ENCODE measurements at regions of chr3 and their contacts with region 1.

Region 1: DNA sequence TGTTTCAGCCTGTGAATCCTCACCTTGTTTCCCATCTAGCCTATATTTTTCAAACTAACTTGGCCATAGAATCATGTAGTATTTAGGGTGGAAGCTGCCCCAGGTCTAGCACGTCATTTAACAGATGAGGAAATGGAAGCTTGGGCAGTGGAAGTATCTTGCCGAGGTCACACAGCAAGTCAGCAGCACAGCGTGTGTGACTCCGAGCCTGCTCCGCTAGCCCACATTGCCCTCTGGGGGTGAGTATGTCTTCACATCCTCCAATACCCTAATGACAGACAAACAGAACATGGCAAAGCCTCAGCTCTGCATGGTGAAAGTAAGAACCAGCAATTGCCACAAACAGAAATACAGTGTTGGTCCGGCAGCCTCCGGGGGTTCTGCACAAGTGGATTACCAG is 2.2 kb upstream of the CCR5 start:
- DNase-seq: peak; percentile 85
- ATAC-seq: peak; percentile 71
- H3K4me3 Mint-ChIP-seq: peak overlapping the region; percentile 1
- H3K27ac Mint-ChIP-seq: peak overlapping the region; percentile 78
- H3K4me1 Mint-ChIP-seq: peaks cover 70% of the 10 kb centered on the region
- H3K27me3 Mint-ChIP-seq: no peaks in the 10 kb centered on the region

Region 2: GRCh38 chr3:45938864-45939263 is 429.7 kb before region 1 on chr3:
- CTCF ChIA-PET with region 1: interaction called, 14 read pairs
- POLR2A ChIA-PET with region 1: no interaction called
- DNase-seq: peak; percentile 94
- ATAC-seq: peak; percentile 75
- H3K4me3 Mint-ChIP-seq: no peak overlapping the region
- H3K27ac Mint-ChIP-seq: peak overlapping the region; percentile 56
- H3K4me1 Mint-ChIP-seq: peaks cover 65% of the 10 kb centered on the region
- H3K27me3 Mint-ChIP-seq: no peaks in the 10 kb centered on the region

Region 3: DNA sequence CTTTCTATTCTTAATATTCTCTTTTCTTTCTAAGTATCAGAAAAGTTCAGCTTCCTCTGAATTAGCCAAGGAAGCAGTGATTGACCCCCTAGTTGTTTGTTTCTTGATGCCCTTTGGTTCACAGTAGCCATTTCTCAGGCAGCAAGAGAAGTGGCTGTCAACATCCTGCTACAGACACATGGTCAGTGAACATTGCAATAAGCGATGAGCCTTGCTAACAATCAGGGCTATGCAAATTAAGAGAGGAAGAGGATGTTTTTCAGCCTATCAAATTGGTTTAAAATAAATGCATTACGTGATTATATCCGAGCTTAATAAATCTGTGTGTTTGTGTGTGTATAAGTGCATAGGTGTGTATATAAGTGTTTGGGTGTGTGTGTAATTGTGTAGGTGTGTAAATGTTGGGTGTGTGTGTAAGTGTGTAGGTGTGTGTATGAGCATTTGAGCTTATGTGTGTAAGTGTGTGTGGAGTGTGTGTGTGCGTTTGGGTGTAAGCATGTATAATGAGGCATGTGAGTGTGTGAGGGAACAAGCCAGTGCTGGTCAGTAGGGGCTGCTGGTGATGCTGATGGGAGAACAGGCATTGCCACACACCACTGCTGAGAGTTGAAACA is 263.2 kb before region 1 on chr3:
- CTCF ChIA-PET with region 1: interaction called, 15 read pairs
- POLR2A ChIA-PET with region 1: interaction called, 3 read pairs
- DNase-seq: no peak
- ATAC-seq: no peak
- H3K4me3 Mint-ChIP-seq: no peak overlapping the region
- H3K27ac Mint-ChIP-seq: peak overlapping the region; percentile 70
- H3K4me1 Mint-ChIP-seq: peaks cover 89% of the 10 kb centered on the region
- H3K27me3 Mint-ChIP-seq: no peaks in the 10 kb centered on the region

Region 4: GRCh38 chr3:46163318-46164041 is 205.1 kb before region 1 on chr3:
- CTCF ChIA-PET with region 1: no interaction called
- POLR2A ChIA-PET with region 1: no interaction called
- DNase-seq: no peak
- ATAC-seq: no peak
- H3K4me3 Mint-ChIP-seq: no peak overlapping the region
- H3K27ac Mint-ChIP-seq: no peak overlapping the region
- H3K4me1 Mint-ChIP-seq: peaks cover 12% of the 10 kb centered on the region
- H3K27me3 Mint-ChIP-seq: peaks cover 36% of the 10 kb centered on the region

Region 5: DNA sequence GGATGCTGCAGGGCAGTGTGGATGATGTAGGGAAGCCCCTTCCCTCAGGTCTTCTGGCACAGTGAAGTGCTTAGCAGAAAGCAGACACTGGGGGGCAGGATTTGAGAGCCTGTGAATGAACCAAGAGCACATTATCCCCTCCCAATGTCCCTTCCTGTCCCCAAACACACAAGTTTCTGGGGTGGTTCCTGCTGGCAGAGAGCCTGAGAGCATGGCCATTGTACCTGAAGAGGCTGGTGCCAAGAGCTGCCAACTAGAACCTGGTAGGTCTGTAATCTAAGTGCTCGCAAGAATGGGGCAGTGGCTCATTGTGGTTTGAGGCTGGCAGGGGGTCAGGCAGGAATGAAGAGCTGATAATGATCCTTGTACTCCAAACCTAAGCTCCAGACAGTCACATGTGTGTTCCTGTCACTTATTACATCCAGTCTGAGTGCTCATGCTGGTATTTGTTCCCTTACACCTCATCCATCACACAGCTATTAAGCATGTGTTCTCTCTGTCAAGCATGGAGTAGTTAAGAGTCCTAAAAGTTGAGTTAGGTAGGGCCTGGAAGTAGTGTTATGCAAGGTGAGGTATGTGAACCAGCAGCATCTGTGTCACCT is 153.7 kb before region 1 on chr3:
- CTCF ChIA-PET with region 1: interaction called, 371 read pairs
- POLR2A ChIA-PET with region 1: interaction called, 63 read pairs
- DNase-seq: peak; percentile 64
- ATAC-seq: peak; percentile 13
- H3K4me3 Mint-ChIP-seq: no peak overlapping the region
- H3K27ac Mint-ChIP-seq: no peak overlapping the region
- H3K4me1 Mint-ChIP-seq: peaks cover 32% of the 10 kb centered on the region
- H3K27me3 Mint-ChIP-seq: no peaks in the 10 kb centered on the region

Region 6: GRCh38 chr3:46266598-46266997 is 102.0 kb before region 1 on chr3:
- CTCF ChIA-PET with region 1: interaction called, 276 read pairs
- POLR2A ChIA-PET with region 1: interaction called, 4 read pairs
- DNase-seq: no peak
- ATAC-seq: no peak
- H3K4me3 Mint-ChIP-seq: no peak overlapping the region
- H3K27ac Mint-ChIP-seq: no peak overlapping the region
- H3K4me1 Mint-ChIP-seq: peaks cover 51% of the 10 kb centered on the region
- H3K27me3 Mint-ChIP-seq: no peaks in the 10 kb centered on the region

Region 7: DNA sequence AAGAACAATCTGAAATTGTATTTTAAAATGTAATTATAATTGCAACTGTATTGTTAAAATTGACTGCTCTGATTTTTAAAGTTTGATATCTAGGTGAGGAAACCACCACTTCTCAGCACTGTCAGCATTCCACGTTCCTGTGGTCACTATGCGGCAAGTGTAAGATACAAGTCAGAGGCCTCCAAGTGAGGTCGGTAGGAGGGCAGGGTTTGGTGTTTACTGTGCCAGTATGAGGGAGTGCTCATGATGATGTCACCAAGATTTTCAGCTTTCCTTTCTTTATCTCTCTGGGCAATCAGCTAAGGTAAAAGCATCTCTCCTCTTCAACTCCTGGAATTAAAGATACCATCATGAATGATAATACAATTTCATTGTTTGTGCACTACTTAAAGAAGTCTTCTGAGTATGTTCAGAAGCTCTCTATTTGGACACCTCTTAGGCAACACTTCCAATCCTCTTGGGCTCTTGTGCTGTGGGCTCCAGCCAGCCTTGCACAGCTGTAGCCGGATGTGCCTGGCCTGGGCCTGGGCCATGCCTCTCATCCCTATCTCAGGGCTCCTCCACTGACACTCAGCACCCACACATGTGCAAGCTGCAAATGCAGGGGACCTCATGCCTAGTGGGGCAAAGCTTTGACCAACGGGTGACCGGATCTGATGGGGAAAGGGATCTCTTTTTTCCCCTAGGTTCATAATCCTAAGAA is 83.4 kb before region 1 on chr3:
- CTCF ChIA-PET with region 1: interaction called, 95 read pairs
- POLR2A ChIA-PET with region 1: interaction called, 29 read pairs
- DNase-seq: peak; percentile 72
- ATAC-seq: peak; percentile 74
- H3K4me3 Mint-ChIP-seq: peak overlapping the region; percentile 26
- H3K27ac Mint-ChIP-seq: peak overlapping the region; percentile 82
- H3K4me1 Mint-ChIP-seq: peaks cover 84% of the 10 kb centered on the region
- H3K27me3 Mint-ChIP-seq: no peaks in the 10 kb centered on the region

Region 8: GRCh38 chr3:46349485-46350261 is 18.9 kb before region 1 on chr3:
- CTCF ChIA-PET with region 1: interaction called, 198 read pairs
- POLR2A ChIA-PET with region 1: interaction called, 28 read pairs
- DNase-seq: peak; percentile 68
- ATAC-seq: peak; percentile 54
- H3K4me3 Mint-ChIP-seq: peak overlapping the region; percentile 59
- H3K27ac Mint-ChIP-seq: peak overlapping the region; percentile 91
- H3K4me1 Mint-ChIP-seq: peaks cover 80% of the 10 kb centered on the region
- H3K27me3 Mint-ChIP-seq: no peaks in the 10 kb centered on the region